ENCODE measurements at regions of chr16 and their contacts with region 1.

Region 1: DNA sequence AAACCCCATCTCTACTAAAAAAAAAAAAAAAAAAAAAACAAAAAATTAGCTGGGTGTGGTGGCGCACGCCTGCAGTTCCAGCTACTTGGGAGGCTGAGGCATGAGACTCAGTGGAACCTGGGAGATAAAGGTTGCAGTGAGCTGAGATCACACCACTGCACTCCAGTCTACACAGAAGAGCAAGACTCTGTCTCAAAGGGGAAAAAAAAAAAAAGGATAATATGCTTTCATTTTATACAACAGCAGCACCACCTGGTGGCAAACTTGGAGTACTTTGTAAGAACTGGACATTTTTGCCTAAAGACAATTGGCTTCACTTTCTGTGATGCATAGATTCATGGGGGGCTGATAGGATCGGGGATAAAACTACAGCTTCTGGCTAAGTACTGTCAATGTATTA is 8.5 kb downstream of the CHTF8 start:
- DNase-seq: peak; percentile 28 to 84 (median 65)
- ATAC-seq: peak; percentile 89
- H3K4me3 ChIP-seq: no peak overlapping the region
- H3K4me3 Mint-ChIP-seq: no peak overlapping the region
- H3K27ac ChIP-seq: no peak overlapping the region
- H3K27ac Mint-ChIP-seq: no peak overlapping the region
- H3K4me1 ChIP-seq: no peaks in the 10 kb centered on the region
- H3K4me1 Mint-ChIP-seq: peaks cover 28% of the 10 kb centered on the region
- H3K27me3 ChIP-seq: no peaks in the 10 kb centered on the region
- H3K27me3 Mint-ChIP-seq: no peaks in the 10 kb centered on the region
- CTCF ChIP-seq: peak; percentile 83

Region 2: DNA sequence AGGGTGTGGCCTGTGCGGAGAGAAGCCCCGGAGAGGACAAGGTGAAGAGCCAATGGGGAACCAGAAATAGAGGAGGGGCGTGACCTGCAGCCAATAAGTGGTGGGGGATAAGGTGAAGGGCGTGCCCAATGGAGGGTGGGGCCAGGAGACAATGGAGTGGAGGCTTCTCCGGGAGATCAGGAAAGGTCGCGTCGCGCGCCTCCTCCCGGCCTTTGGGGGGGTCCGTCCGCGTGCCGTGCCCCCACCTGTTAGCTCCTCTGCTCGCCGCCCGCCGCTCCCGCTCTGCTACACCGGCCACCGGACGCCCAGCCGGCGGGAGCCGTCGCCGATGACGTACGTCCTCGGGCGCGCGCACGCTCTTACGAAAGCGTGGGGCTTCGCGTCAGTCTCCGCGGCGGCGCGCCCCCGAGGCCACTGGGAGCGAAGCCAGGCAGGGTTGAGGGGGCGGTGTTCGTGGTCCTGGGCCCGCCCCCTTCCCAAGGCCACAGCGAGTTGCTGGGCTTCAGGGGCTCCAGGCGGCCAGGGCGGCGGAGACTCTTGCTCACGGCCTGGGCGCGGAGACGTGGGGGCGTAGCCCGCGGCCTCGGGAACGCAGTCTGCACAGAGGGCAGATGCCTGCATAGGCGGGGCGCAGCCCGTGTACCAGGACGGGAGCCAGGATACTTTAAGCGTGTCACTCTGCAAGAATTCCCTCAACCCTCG is 1940.1 kb before region 1 on chr16 and contains the start of gene MATCAP1:
- CTCF ChIA-PET with region 1: no interaction called
- POLR2A ChIA-PET with region 1: no interaction called
- intact Hi-C with region 1: no loop called
- DNase-seq: peak; percentile 84 to 98 (median 92)
- ATAC-seq: peak; percentile 96
- H3K4me3 ChIP-seq: peak within 1 kb of the TSS; percentile 65 to 76
- H3K4me3 Mint-ChIP-seq: no peak within 1 kb of the TSS
- H3K27ac ChIP-seq: peak within 1 kb of the TSS; percentile 84 to 95
- H3K27ac Mint-ChIP-seq: no peak within 1 kb of the TSS
- H3K4me1 ChIP-seq: peaks cover 20% of the 10 kb centered on the region
- H3K4me1 Mint-ChIP-seq: peaks cover 17% of the 10 kb centered on the region
- H3K27me3 ChIP-seq: peaks cover 0 to 2% of the 10 kb centered on the region in 2 experiments
- H3K27me3 Mint-ChIP-seq: peaks cover 10% of the 10 kb centered on the region
- CTCF ChIP-seq: no peak
- total RNA-seq, gene MATCAP1: 7.7 to 8.0 TPM

Region 3: DNA sequence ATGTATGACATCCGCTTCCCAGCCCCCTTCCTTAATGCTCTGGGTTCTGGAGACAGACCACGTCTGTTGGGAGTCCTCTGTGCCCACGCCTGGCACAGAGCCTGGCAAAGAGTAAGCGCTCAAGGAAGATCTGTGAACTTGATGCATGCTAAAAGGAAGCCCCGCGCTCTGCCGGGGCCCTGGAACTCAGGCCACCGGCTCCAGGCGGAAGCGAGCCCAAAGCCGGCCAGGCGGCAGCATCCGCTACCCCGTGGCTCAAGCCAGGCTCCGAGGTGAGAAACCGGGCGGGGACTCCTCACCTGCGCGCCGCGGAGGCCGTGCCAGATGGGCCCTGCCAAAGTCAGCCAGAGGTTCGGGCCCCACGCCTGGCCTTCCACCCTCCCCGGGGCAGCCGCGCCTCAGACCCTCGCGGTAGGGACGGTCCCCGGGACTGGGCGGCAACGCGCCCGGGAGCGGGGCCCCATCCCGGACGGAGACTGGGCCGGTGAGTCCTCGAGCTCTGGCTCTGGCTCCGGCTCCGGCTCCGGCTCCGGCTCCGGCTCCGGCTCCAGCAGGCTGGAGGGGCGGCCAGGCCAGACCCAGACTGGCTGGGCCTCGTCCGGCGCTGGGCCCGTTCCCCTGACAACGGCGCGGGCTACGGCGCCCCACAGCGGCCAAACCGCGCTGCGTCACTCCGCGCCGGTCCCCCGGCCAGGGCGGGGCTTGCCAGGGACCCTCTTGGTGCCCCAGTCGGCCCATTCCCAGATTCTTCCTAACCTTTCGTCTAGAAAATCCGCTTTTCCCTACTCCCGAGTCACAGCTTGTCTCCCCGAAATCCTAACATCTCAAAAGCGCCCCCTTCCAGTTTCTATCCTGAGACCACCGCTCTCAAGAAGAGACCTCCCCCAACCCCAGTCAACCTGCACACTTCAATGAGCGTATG is 1707.8 kb before region 1 on chr16 and contains the start of gene ZDHHC1:
- CTCF ChIA-PET with region 1: no interaction called
- POLR2A ChIA-PET with region 1: no interaction called
- intact Hi-C with region 1: no loop called
- DNase-seq: peak; percentile 16 to 67 (median 44)
- ATAC-seq: peak; percentile 88
- H3K4me3 ChIP-seq: peak within 1 kb of the TSS; percentile 35 to 55
- H3K4me3 Mint-ChIP-seq: peak within 1 kb of the TSS; percentile 75
- H3K27ac ChIP-seq: no peak within 1 kb of the TSS
- H3K27ac Mint-ChIP-seq: no peak within 1 kb of the TSS
- H3K4me1 ChIP-seq: peaks cover 5% of the 10 kb centered on the region
- H3K4me1 Mint-ChIP-seq: peaks cover 7% of the 10 kb centered on the region
- H3K27me3 ChIP-seq: no peaks in the 10 kb centered on the region
- H3K27me3 Mint-ChIP-seq: peaks cover 25% of the 10 kb centered on the region
- CTCF ChIP-seq: no peak
- total RNA-seq, gene ZDHHC1: not detected

Region 4: DNA sequence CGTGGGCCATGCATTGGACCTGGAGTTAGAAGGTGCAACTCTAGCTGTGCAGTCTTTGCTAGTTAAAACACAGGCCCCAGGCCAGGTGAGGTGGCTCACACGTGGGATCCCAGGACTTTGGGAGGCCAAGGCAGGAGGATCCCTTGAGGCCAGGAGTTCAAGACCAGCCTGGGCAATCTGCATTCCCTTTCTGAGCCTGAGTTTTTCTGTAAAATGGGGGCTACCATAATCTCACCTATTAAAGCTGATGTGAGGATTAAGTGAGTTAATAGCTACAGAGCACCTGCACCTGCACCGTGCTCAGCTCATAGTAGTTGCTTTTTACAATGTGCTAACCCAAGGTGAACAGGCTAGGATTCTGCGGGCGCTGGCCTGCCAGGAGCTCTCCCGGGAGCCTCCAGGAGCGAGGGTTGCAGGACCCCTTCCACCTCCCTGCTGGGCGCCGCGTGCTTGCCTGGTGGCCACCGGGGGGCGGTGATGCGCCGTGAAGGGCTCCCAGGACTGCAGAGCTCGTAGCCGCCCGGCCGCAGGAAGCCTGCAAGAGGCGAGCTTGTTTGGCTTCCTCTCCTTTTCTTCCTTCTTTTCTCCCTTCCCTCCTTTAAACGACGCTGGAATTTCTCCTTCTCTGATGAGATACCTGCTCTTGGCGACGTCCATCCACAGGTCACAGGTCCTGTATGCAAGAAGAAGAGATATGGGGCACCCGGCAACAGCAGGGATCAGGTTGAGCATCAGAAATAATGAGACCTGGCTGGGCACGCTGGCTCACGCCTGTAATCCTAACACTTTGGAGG is 533.5 kb before region 1 on chr16:
- CTCF ChIA-PET with region 1: interaction called, 5 read pairs
- POLR2A ChIA-PET with region 1: no interaction called
- intact Hi-C with region 1: loop called (anchors 2 to 5 kb)
- DNase-seq: peak; percentile 6 to 66 (median 62)
- ATAC-seq: peak; percentile 83
- H3K4me3 ChIP-seq: no peak overlapping the region
- H3K4me3 Mint-ChIP-seq: no peak overlapping the region
- H3K27ac ChIP-seq: no peak overlapping the region
- H3K27ac Mint-ChIP-seq: no peak overlapping the region
- H3K4me1 ChIP-seq: no peaks in the 10 kb centered on the region
- H3K4me1 Mint-ChIP-seq: peaks cover 2% of the 10 kb centered on the region
- H3K27me3 ChIP-seq: no peaks in the 10 kb centered on the region
- H3K27me3 Mint-ChIP-seq: no peaks in the 10 kb centered on the region
- CTCF ChIP-seq: peak; percentile 52

Region 5: GRCh38 chr16:68843482-68844210 is 280.3 kb before region 1 on chr16 and contains the start of gene TANGO6:
- CTCF ChIA-PET with region 1: interaction called, 9 read pairs
- POLR2A ChIA-PET with region 1: interaction called, 3 read pairs
- intact Hi-C with region 1: loop called in 1 of 2 experiments (anchors 1 kb)
- DNase-seq: peak; percentile 81 to 93 (median 90)
- ATAC-seq: peak; percentile 95
- H3K4me3 ChIP-seq: peak within 1 kb of the TSS; percentile 86 to 94
- H3K4me3 Mint-ChIP-seq: peak within 1 kb of the TSS; percentile 92
- H3K27ac ChIP-seq: peak within 1 kb of the TSS; percentile 78 to 86
- H3K27ac Mint-ChIP-seq: peak within 1 kb of the TSS; percentile 89
- H3K4me1 ChIP-seq: peaks cover 24% of the 10 kb centered on the region
- H3K4me1 Mint-ChIP-seq: peaks cover 29% of the 10 kb centered on the region
- H3K27me3 ChIP-seq: no peaks in the 10 kb centered on the region
- H3K27me3 Mint-ChIP-seq: no peaks in the 10 kb centered on the region
- CTCF ChIP-seq: no peak
- total RNA-seq, gene TANGO6: 12.1 to 16.3 TPM

Region 6: DNA sequence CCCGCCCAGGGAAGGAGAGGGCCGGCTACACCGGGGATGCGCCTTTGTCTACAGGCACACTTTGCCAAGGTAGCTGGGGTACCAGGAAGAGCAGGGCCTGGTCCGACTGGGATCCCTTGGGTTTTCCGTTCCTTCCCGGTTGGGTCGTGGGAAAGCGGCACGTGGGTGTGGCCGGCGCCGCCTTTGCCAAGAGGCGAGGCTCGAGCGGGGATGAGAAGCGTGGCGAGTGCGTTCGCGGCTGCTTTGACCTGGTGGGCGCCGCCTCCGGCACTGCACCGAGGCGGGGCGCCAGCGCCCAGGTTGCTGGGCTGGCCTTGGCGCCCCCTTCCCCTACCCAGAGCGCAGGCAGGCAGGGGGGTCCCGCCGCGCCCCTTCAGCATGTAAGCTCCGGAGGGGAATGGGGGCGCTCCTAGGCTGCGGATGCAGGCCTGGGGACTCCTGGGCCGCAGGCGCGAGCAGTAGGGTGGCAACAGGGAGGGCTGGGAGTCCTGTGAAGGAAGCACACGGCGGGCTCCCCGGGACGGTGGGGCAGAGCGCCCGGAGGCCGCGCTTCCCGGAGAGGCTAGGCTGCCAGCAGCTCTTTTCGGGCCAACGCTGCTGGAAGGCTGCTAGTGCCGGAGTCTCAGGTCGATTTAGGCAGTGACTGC is 16.5 kb before region 1 on chr16:
- CTCF ChIA-PET with region 1: interaction called, 41 read pairs
- POLR2A ChIA-PET with region 1: no interaction called
- intact Hi-C with region 1: loop called in 1 of 2 experiments (anchors 1 kb)
- DNase-seq: no peak
- ATAC-seq: no peak
- H3K4me3 ChIP-seq: no peak overlapping the region
- H3K4me3 Mint-ChIP-seq: peak overlapping the region; percentile 69
- H3K27ac ChIP-seq: no peak overlapping the region
- H3K27ac Mint-ChIP-seq: no peak overlapping the region
- H3K4me1 ChIP-seq: peaks cover 26% of the 10 kb centered on the region
- H3K4me1 Mint-ChIP-seq: peaks cover 20% of the 10 kb centered on the region
- H3K27me3 ChIP-seq: peaks cover 10 to 16% of the 10 kb centered on the region in 2 experiments
- H3K27me3 Mint-ChIP-seq: peaks cover 33% of the 10 kb centered on the region
- CTCF ChIP-seq: no peak

Region 7: GRCh38 chr16:69150146-69150865 is 26.4 kb after region 1 on chr16:
- CTCF ChIA-PET with region 1: interaction called, 14 read pairs
- POLR2A ChIA-PET with region 1: no interaction called
- intact Hi-C with region 1: no loop called
- DNase-seq: peak in 7 of 9 experiments; percentile 32 to 81 (median 60)
- ATAC-seq: peak; percentile 77
- H3K4me3 ChIP-seq: no peak overlapping the region
- H3K4me3 Mint-ChIP-seq: no peak overlapping the region
- H3K27ac ChIP-seq: no peak overlapping the region
- H3K27ac Mint-ChIP-seq: no peak overlapping the region
- H3K4me1 ChIP-seq: no peaks in the 10 kb centered on the region
- H3K4me1 Mint-ChIP-seq: no peaks in the 10 kb centered on the region
- H3K27me3 ChIP-seq: no peaks in the 10 kb centered on the region
- H3K27me3 Mint-ChIP-seq: no peaks in the 10 kb centered on the region
- CTCF ChIP-seq: peak; percentile 71